ENCODE measurements at regions of chr1 and their contacts with region 1.

Region 1: DNA sequence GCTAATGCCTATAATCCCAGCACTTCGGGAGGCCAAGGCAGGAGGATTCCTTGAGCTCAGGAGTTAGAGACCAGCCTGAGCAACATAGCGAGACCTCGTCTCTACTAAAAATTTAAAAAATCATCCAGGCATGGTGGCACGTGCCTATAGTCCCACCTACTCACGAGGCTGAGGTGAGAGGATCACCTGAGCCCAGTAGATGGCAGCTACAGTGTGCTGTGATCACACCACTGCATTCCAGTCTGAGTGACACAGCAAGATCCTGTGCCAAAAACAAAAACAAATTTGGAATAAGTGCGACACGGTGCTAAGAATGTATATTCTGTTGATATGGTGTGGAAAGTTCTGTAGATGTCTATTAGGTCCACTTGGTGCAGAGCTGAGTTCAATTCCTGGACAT is 15.1 kb downstream of the USP33 start:
- DNase-seq: no peak
- ATAC-seq: no peak
- H3K4me3 ChIP-seq: no peak overlapping the region
- H3K27ac ChIP-seq: no peak overlapping the region
- H3K4me1 ChIP-seq: no peaks in the 10 kb centered on the region
- H3K27me3 ChIP-seq: no peaks in the 10 kb centered on the region
- CTCF ChIP-seq: no peak

Region 2: DNA sequence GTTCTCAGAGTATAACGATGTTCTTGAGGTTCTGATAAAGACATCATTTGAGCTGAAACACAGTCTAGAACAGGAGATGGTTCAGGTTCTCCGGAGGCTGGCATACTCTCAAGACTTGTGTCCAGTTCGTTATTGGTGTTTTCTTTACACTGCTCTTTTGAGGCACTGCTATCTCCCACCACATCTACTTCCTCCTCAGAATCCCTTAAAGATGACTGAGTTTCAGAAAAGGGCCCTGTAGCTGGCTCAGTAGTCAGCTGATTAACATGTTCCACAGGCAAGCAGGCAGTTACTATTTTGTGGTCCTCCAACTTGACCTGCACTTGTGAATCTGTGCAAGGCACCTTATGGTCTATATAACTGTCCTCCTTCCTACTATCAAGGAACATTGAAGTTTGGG is 112.4 kb before region 1 on chr1:
- CTCF ChIA-PET with region 1: no interaction called
- POLR2A ChIA-PET with region 1: no interaction called
- in situ Hi-C with region 1: no loop called
- intact Hi-C with region 1: no loop called
- DNase-seq: no peak
- ATAC-seq: no peak
- H3K4me3 ChIP-seq: no peak overlapping the region
- H3K27ac ChIP-seq: no peak overlapping the region
- H3K4me1 ChIP-seq: no peaks in the 10 kb centered on the region
- H3K27me3 ChIP-seq: no peaks in the 10 kb centered on the region
- CTCF ChIP-seq: no peak

Region 3: GRCh38 chr1:77688939-77689338 is 55.6 kb before region 1 on chr1:
- CTCF ChIA-PET with region 1: no interaction called
- POLR2A ChIA-PET with region 1: interaction called, 15 read pairs
- in situ Hi-C with region 1: no loop called
- intact Hi-C with region 1: no loop called
- DNase-seq: no peak
- ATAC-seq: no peak
- H3K4me3 ChIP-seq: no peak overlapping the region
- H3K27ac ChIP-seq: no peak overlapping the region
- H3K4me1 ChIP-seq: peaks cover 5% of the 10 kb centered on the region; the same call in 1 of the 2 replicates
- H3K27me3 ChIP-seq: no peaks in the 10 kb centered on the region
- CTCF ChIP-seq: no peak

Region 4: DNA sequence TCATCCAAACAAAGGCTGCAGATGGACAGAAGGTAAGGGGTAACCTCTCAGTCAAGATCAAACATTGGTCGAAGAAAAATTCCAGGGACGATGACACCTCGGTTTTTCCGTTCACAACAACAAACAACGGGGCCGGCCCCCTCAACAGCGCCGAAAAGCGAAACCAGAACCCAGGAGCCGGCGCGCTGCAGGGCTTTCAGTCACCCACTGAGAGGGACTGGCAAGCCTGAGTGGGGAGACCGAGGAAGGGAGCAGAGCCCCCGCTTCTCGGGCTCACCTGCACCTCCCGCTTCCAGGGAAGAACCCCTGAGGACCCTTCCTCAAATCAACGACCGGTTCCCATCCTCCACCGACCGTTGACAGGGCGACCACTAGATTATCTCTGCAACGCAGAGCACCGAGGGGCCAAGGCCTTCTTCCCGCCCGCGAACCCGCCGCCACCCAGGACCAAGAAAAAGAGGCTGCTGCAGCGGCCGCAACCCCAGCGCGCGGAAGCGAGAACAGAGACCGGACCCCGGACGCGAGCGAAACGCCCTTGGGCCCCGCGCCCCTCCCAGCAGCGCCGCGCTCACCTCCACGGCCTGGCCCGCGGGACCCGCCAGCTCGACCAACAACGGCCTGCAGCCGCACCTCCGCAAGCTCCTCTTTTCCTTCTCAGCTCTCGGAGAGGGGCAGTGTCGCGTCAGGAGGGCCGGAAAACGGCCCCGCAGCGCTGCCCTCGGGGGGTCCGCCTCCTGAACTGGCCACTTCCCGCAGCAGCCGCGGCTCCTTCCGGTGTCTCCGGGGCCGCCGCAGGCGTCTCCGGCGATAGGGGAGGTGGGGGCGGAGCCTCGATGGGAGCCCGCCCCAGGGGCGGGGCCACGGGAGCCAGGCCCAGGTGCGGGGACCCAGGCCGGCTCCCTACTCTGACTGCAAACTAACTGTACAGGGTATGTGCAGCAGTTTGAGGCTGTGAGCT is 14.8 kb after region 1 on chr1 and contains the start of gene USP33:
- CTCF ChIA-PET with region 1: no interaction called
- POLR2A ChIA-PET with region 1: no interaction called
- in situ Hi-C with region 1: no loop called
- intact Hi-C with region 1: no loop called
- DNase-seq: no peak
- ATAC-seq: peak; percentile 98
- H3K4me3 ChIP-seq: peak within 1 kb of the TSS; percentile 70 to 85
- H3K27ac ChIP-seq: peak within 1 kb of the TSS; percentile 92
- H3K4me1 ChIP-seq: peaks cover 11% of the 10 kb centered on the region; the same call in 1 of the 2 replicates
- H3K27me3 ChIP-seq: no peaks in the 10 kb centered on the region
- CTCF ChIP-seq: no peak
- total RNA-seq, gene USP33: 52.2 TPM

Region 5: GRCh38 chr1:77779529-77780281 is 35.1 kb after region 1 on chr1 and contains the start of gene MIGA1:
- CTCF ChIA-PET with region 1: interaction called, 14 read pairs
- POLR2A ChIA-PET with region 1: no interaction called
- in situ Hi-C with region 1: no loop called
- intact Hi-C with region 1: no loop called
- DNase-seq: no peak
- ATAC-seq: peak; percentile 100
- H3K4me3 ChIP-seq: peak within 1 kb of the TSS; percentile 70 to 87
- H3K27ac ChIP-seq: peak within 1 kb of the TSS; percentile 88
- H3K4me1 ChIP-seq: peaks cover 5% of the 10 kb centered on the region
- H3K27me3 ChIP-seq: no peaks in the 10 kb centered on the region
- CTCF ChIP-seq: no peak
- total RNA-seq, gene MIGA1: 14.4 TPM